MCF 10A (cell line): ENCODE measurements at regions of chr6 and their contacts with region 1.

Region 1: GRCh38 chr6:154156135-154156896 is 117.3 kb downstream of the OPRM1 start:
- DNase-seq: peak; percentile 57
- H3K4me3 Mint-ChIP-seq: no peak overlapping the region
- H3K27ac Mint-ChIP-seq: no peak overlapping the region
- H3K4me1 Mint-ChIP-seq: peaks cover 4% of the 10 kb centered on the region
- H3K27me3 Mint-ChIP-seq: no peaks in the 10 kb centered on the region
- CTCF ChIP-seq: peak; percentile 51

Region 2: DNA sequence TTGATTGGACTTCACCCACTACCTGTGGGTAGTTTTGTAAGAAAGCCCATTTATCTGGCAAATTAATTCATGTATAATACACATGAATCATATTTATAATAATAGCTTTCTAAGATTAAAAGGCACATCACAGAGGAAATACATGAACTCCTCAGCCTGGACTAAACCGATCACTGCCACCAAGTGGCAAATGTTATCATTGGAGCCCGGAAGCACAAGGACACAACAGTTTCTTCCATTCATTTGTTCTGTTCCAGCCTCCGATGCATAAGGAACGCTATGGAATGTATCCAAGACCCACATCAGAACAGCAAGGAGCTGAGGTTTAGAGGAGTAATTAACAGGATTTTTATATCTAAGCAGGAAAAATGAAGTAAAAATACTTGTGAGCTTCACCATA is 214.2 kb after region 1 on chr6:
- CTCF ChIA-PET with region 1: interaction called, 5 read pairs
- POLR2A ChIA-PET with region 1: interaction called, 4 read pairs
- intact Hi-C with region 1: loop called (anchors 1 kb)
- DNase-seq: peak; percentile 38
- H3K4me3 Mint-ChIP-seq: no peak overlapping the region
- H3K27ac Mint-ChIP-seq: no peak overlapping the region
- H3K4me1 Mint-ChIP-seq: peaks cover 13% of the 10 kb centered on the region
- H3K27me3 Mint-ChIP-seq: no peaks in the 10 kb centered on the region
- CTCF ChIP-seq: peak; percentile 18

Region 3: GRCh38 chr6:154408891-154409500 is 252.7 kb after region 1 on chr6:
- CTCF ChIA-PET with region 1: interaction called, 4 read pairs
- POLR2A ChIA-PET with region 1: no interaction called
- intact Hi-C with region 1: loop called (anchors 1 kb)
- DNase-seq: peak; percentile 49
- H3K4me3 Mint-ChIP-seq: no peak overlapping the region
- H3K27ac Mint-ChIP-seq: no peak overlapping the region
- H3K4me1 Mint-ChIP-seq: peaks cover 25% of the 10 kb centered on the region
- H3K27me3 Mint-ChIP-seq: no peaks in the 10 kb centered on the region
- CTCF ChIP-seq: peak; percentile 18